ENCODE measurements at regions of chr5 and their contacts with region 1.

Region 1: DNA sequence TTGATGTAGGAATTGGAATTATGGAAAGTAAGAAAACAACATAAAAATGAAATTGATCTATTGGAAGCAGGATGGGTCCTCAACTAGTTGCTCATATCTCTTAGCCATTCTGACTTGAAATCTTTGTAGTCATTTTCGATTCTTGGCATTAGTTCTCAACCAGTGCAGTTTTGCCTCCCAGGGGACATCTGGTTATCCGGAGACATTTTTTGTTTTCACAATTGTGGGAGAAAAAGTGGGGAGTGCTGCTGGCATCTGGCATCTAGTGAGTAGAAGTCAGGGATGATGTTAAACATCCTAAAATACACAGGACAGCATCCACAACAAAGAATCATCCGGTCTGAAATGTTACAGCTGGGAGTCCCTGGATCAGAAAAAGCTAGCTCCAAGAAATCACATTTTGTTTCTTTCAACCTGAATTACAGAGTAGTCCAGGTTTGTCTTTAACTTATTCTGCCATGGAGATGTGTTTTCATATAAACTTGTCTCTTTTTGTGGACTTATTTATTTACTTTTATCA is 74.9 kb downstream of the FBXL7 start:
- DNase-seq: no peak
- ATAC-seq: no peak
- H3K4me3 ChIP-seq: no peak overlapping the region
- H3K4me3 Mint-ChIP-seq: no peak overlapping the region
- H3K27ac ChIP-seq: no peak overlapping the region
- H3K27ac Mint-ChIP-seq: no peak overlapping the region
- H3K4me1 ChIP-seq: no peaks in the 10 kb centered on the region
- H3K4me1 Mint-ChIP-seq: no peaks in the 10 kb centered on the region
- H3K27me3 ChIP-seq: no peaks in the 10 kb centered on the region
- H3K27me3 Mint-ChIP-seq: peaks cover 0 to 9% (median 0%) of the 10 kb centered on the region in 5 donors

Region 2: DNA sequence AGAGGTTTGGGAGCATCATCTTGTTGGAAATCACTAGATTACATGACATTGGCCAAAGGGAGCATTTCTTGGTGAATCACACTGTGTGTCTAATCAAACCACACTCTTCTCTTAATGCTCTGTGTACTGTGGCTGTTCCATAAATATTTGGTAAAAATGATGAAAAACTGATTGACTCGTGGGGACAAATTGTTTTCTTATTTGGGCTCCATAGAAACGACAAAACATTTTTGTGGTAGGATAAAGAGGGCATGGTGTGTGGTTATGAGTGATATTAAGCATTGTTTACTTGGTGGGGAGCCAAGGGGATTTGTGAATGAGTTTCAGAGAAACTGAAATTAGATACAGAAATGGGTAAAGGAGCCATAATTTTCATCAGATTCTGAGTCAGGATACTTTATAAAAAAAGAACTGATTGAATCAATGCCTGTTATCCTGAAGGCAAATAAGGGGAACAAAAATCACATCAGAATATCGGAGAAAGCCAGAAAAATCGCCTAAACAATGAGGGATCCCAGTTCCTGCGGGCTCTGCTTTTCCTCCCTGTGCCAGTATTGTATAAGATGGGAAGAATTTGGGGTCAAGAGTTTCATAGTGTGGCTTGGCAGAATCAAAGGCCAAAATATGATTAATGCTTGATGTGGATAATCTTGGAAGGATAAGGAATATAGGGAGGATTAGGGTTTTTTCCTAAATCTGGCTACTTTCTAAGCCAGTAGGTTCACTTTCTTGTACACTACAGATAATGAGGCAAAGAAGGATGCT is 41.6 kb before region 1 on chr5:
- CTCF ChIA-PET with region 1: no interaction called
- POLR2A ChIA-PET with region 1: no interaction called
- intact Hi-C with region 1: no loop called
- DNase-seq: no peak
- ATAC-seq: no peak
- H3K4me3 ChIP-seq: no peak overlapping the region
- H3K4me3 Mint-ChIP-seq: no peak overlapping the region
- H3K27ac ChIP-seq: no peak overlapping the region
- H3K27ac Mint-ChIP-seq: no peak overlapping the region
- H3K4me1 ChIP-seq: no peaks in the 10 kb centered on the region
- H3K4me1 Mint-ChIP-seq: no peaks in the 10 kb centered on the region
- H3K27me3 ChIP-seq: no peaks in the 10 kb centered on the region
- H3K27me3 Mint-ChIP-seq: no peaks in the 10 kb centered on the region

Region 3: DNA sequence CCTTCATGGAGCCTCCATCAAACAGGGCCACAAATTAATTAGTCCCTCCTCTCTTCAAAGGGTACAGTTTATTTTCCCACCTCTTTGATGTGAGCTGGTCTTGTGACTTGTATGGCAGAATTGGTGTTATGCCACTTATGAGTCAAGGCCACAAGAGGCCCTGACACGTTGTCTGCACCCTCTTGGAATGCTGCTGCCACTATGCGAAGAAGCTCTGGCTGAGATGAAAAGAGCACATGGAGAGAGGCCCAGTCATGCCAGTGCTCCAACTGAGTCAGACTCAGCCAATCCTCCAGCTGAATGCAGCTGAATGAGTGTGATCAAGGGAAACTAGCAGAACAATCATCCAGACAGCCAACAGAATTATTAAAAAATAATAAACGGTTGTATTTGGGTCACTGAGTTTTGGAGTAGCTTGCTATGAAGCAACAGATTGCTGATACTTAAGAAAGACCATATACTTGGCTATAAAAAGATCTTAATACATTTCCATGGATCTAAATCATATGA is 476.4 kb after region 1 on chr5:
- CTCF ChIA-PET with region 1: no interaction called
- POLR2A ChIA-PET with region 1: no interaction called
- intact Hi-C with region 1: loop called in 1 of 2 experiments (anchors 10 kb)
- DNase-seq: no peak
- ATAC-seq: no peak
- H3K4me3 ChIP-seq: no peak overlapping the region
- H3K4me3 Mint-ChIP-seq: no peak overlapping the region
- H3K27ac ChIP-seq: no peak overlapping the region
- H3K27ac Mint-ChIP-seq: no peak overlapping the region
- H3K4me1 ChIP-seq: no peaks in the 10 kb centered on the region
- H3K4me1 Mint-ChIP-seq: no peaks in the 10 kb centered on the region
- H3K27me3 ChIP-seq: no peaks in the 10 kb centered on the region
- H3K27me3 Mint-ChIP-seq: no peaks in the 10 kb centered on the region